ENCODE measurements at regions of chr17 and their contacts with region 1.

Region 1: GRCh38 chr17:42577532-42578281 is at the start of gene PSMC3IP:
- DNase-seq: peak; percentile 98
- ATAC-seq: peak; percentile 92
- H3K4me3 Mint-ChIP-seq: peak within 1 kb of the TSS; percentile 88
- H3K27ac Mint-ChIP-seq: peak within 1 kb of the TSS; percentile 98
- H3K4me1 Mint-ChIP-seq: peaks cover 28% of the 10 kb centered on the region
- H3K27me3 Mint-ChIP-seq: no peaks in the 10 kb centered on the region
- total RNA-seq, gene PSMC3IP: 27.0 to 28.9 TPM

Region 2: DNA sequence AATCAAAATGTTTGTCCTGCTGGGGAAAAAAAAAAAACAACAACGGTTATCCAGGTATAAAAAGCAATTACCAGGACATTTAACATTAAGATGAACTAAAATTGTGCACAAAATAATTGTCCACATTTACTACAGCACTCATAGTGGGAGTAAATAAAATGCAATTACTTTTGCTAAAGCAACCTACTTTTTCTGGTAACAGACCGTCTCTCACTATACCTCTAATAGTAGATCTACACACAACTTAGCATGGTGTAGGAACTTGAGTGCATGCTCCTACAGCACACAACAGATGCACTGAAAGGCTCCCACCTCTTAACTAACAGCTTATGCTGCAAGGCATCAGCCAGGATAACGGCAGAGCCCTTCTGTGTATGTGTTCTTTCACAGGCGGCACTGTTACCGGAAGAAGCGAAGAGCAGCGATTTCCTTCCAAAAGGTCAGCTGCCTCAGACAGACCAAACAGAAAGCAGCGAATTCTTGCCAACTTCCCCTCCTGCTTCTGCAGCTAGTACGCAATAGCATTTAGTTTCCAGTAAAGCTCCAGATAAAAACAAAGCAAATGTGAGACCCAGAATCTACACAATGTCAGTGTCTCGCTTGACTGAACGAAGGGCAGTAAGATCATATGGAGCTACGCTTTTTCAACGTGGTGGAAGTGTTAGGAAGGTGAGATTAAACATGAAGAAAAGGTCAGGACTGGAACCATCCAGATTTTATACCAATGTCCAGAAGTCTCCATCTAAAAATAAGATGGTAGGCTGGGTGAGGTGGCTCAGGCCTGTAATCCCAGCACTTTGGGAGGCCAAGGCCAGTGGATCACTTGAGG is 329.1 kb before region 1 on chr17:
- CTCF ChIA-PET with region 1: no interaction called
- POLR2A ChIA-PET with region 1: no interaction called
- intact Hi-C with region 1: no loop called
- DNase-seq: peak; percentile 87
- ATAC-seq: peak; percentile 81
- H3K4me3 Mint-ChIP-seq: peak overlapping the region; percentile 79
- H3K27ac Mint-ChIP-seq: peak overlapping the region; percentile 100
- H3K4me1 Mint-ChIP-seq: peaks cover 71% of the 10 kb centered on the region
- H3K27me3 Mint-ChIP-seq: no peaks in the 10 kb centered on the region

Region 3: GRCh38 chr17:42598905-42599304 is 21.2 kb after region 1 on chr17:
- CTCF ChIA-PET with region 1: interaction called, 80 read pairs
- POLR2A ChIA-PET with region 1: no interaction called
- intact Hi-C with region 1: no loop called
- DNase-seq: no peak
- ATAC-seq: no peak
- H3K4me3 Mint-ChIP-seq: no peak overlapping the region
- H3K27ac Mint-ChIP-seq: no peak overlapping the region
- H3K4me1 Mint-ChIP-seq: peaks cover 19% of the 10 kb centered on the region
- H3K27me3 Mint-ChIP-seq: no peaks in the 10 kb centered on the region

Region 4: GRCh38 chr17:42720996-42721583 is 143.4 kb after region 1 on chr17:
- CTCF ChIA-PET with region 1: interaction called, 10 read pairs
- POLR2A ChIA-PET with region 1: no interaction called
- intact Hi-C with region 1: no loop called
- DNase-seq: peak; percentile 33
- ATAC-seq: peak; percentile 90
- H3K4me3 Mint-ChIP-seq: no peak overlapping the region
- H3K27ac Mint-ChIP-seq: no peak overlapping the region
- H3K4me1 Mint-ChIP-seq: peaks cover 2% of the 10 kb centered on the region
- H3K27me3 Mint-ChIP-seq: no peaks in the 10 kb centered on the region

Region 5: GRCh38 chr17:42773290-42774035 is 195.8 kb after region 1 on chr17 and contains the start of gene VPS25:
- CTCF ChIA-PET with region 1: interaction called, 13 read pairs
- POLR2A ChIA-PET with region 1: no interaction called
- intact Hi-C with region 1: loop called in 1 of 2 experiments (anchors 1 kb)
- DNase-seq: peak; percentile 81
- ATAC-seq: peak; percentile 97
- H3K4me3 Mint-ChIP-seq: peak within 1 kb of the TSS; percentile 96
- H3K27ac Mint-ChIP-seq: peak within 1 kb of the TSS; percentile 95
- H3K4me1 Mint-ChIP-seq: peaks cover 22% of the 10 kb centered on the region
- H3K27me3 Mint-ChIP-seq: no peaks in the 10 kb centered on the region
- total RNA-seq, gene VPS25: 62.5 to 64.0 TPM

Region 6: DNA sequence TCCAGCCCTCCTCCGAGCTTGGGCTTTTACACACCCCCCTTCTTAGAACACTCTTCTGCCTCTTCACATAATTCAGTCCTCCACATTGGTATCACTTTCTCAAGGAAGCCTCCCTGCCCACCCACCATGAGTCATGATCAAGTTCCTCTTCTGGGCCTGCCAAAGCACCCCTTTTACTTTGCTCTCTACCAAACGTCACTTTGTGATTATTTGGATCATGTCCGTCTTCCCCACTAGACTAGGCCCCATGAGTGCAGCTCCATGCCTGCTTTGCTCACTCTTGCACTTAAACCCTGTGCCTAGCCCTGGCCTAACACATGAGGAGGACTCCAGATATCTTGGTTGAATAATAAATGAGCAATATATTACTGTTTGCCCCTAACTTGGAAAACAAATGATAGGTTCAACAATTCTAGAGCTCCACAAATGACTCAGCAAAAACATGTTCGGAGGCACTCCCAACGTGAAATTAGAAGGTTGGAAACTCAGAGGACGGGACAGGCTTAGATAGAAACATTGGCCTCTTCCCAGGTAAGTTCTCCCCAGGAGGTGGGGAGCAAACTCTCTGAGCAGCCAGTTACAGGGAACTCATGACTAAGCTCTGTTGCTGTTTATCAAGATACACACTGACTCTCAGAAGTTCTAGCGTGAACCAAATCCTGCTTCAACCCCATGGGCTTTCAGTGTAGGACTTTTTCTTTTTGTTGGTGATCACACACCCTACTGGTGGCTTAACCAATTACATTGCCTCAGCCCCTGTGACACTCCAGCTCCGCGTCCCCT is 351.2 kb after region 1 on chr17:
- CTCF ChIA-PET with region 1: interaction called, 6 read pairs
- POLR2A ChIA-PET with region 1: no interaction called
- intact Hi-C with region 1: loop called in 1 of 2 experiments (anchors 1 kb)
- DNase-seq: peak; percentile 60
- ATAC-seq: peak; percentile 94
- H3K4me3 Mint-ChIP-seq: peak overlapping the region; percentile 0
- H3K27ac Mint-ChIP-seq: peak overlapping the region; percentile 48
- H3K4me1 Mint-ChIP-seq: peaks cover 14% of the 10 kb centered on the region
- H3K27me3 Mint-ChIP-seq: peaks cover 4% of the 10 kb centered on the region

Region 7: DNA sequence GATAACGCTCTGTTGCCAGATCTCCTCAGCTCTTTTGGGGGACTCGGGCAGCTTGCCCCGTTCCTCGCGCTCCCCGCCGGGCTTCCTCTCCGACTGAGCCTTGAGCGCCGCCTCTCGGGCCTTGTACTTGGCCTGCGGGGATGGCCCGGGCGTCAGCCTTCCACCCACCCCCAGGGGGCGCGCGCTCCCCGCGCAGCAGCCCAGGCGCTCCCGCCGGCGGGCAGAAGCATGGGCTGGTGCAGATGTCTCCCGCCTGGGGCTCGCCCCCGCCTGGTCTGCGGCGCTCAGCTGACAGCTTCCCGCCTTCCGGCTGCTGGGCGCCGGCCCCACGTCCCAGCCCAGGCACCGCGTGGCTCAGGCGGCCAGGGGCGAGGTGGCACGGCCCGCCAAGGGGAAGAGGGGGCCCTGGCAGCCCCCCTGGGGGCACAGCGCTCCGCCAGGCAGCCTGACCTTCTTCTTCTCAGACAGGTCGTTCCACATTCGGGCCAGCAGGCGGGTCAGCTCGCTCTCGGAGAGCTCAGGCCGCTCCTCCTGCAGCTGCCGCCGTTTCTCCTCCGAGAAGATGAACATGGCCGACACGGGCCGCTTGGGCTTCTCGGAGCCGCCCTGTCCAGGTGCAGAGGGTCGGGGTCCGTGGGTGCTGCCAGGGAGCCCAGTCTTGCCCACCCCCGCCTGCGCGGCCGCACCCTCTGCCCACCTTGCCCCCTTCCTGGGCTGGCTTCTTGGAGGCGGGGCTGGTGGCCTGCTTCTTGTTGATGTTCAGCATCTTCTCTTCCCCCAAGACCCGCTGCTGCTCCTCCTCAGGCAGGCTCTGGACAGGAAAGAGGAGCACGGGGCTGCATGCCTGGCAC is 1632.9 kb after region 1 on chr17:
- CTCF ChIA-PET with region 1: no interaction called
- POLR2A ChIA-PET with region 1: no interaction called
- intact Hi-C with region 1: no loop called
- DNase-seq: peak; percentile 96
- ATAC-seq: peak; percentile 84
- H3K4me3 Mint-ChIP-seq: peak overlapping the region; percentile 79
- H3K27ac Mint-ChIP-seq: peak overlapping the region; percentile 98
- H3K4me1 Mint-ChIP-seq: peaks cover 60% of the 10 kb centered on the region
- H3K27me3 Mint-ChIP-seq: no peaks in the 10 kb centered on the region

Measured in activated CD4-positive, alpha-beta T cell treated with anti-CD3 and anti-CD28 coated beads for 36 hours (primary cell).